ENCODE measurements at regions of chr16 and their contacts with region 1.

Region 1: GRCh38 chr16:19086322-19087199 is 19.1 kb downstream of the COQ7 start:
- DNase-seq: peak; percentile 93 to 94
- ATAC-seq: peak; percentile 97
- H3K4me3 ChIP-seq: peak overlapping the region in 1 of 2 donors; percentile 41
- H3K27ac ChIP-seq: no peak overlapping the region
- H3K4me1 ChIP-seq: no peaks in the 10 kb centered on the region
- H3K27me3 ChIP-seq: no peaks in the 10 kb centered on the region

Region 2: GRCh38 chr16:19067349-19068236 is 19.0 kb before region 1 on chr16 and contains the start of gene COQ7:
- intact Hi-C with region 1: loop called in 1 of 2 experiments (anchors 2 kb)
- DNase-seq: peak; percentile 99
- ATAC-seq: peak; percentile 99
- H3K4me3 ChIP-seq: peak within 1 kb of the TSS; percentile 82 to 98
- H3K27ac ChIP-seq: peak within 1 kb of the TSS; percentile 95 to 100
- H3K4me1 ChIP-seq: no peaks in the 10 kb centered on the region
- H3K27me3 ChIP-seq: no peaks in the 10 kb centered on the region
- total RNA-seq, gene COQ7: 18.7 to 19.2 TPM

Region 3: GRCh38 chr16:19118938-19119431 is 32.4 kb after region 1 on chr16:
- intact Hi-C with region 1: loop called (anchors 2 to 5 kb)
- DNase-seq: peak in 1 of 2 donors; percentile 81
- ATAC-seq: peak; percentile 76
- H3K4me3 ChIP-seq: no peak overlapping the region
- H3K27ac ChIP-seq: peak overlapping the region in 1 of 2 donors; percentile 78
- H3K4me1 ChIP-seq: no peaks in the 10 kb centered on the region
- H3K27me3 ChIP-seq: no peaks in the 10 kb centered on the region

Region 4: GRCh38 chr16:19167710-19168370 is 81.3 kb after region 1 on chr16 and contains the start of gene SYT17:
- intact Hi-C with region 1: loop called (anchors 5 kb)
- DNase-seq: peak; percentile 81 to 89
- ATAC-seq: peak; percentile 85
- H3K4me3 ChIP-seq: peak within 1 kb of the TSS; percentile 44 to 52
- H3K27ac ChIP-seq: no peak within 1 kb of the TSS
- H3K4me1 ChIP-seq: no peaks in the 10 kb centered on the region
- H3K27me3 ChIP-seq: no peaks in the 10 kb centered on the region
- total RNA-seq, gene SYT17: 2.5 to 4.3 TPM

Region 5: DNA sequence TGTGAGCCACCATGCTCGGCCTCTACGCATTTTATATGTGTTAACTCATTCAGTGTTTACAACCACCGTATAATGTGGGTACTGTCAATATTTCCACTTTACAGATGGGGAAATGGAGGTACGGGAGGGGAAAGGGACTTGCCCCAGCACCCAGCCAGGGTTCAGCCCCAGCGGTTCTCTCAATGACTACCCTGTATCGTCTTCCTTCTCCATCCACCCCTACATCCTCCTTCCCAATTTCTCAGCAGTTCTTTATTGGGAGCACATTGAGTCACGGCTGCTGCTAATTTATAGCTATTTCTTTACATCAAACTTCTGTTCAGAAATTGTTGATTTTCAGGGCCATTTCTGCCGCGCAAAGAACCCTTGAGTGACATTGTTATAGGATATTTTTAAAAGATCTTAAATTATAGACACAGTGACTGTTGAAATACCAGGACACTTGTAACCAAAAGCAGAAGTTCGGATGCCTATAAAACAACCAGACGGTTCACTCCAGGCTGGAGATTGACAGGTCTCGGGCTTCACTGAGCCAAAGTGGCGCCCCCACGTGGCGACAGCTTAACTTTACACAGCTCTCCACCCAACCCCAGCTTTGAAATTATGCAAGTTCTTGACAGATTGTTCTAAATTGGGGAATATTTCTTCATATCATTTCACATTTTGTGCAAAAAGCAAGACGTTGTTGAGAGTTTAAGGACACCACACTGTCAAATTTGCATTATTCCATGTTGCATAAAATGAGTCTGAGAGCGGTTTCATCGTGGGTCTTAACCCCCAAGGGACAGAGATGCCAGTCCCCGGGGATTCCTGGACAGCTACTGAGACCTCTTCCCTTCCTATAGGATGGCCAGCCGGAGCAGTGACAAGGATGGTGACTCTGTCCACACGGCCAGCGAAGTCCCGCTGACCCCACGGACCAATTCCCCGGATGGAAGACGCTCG is 93.3 kb after region 1 on chr16:
- intact Hi-C with region 1: loop called in 1 of 2 experiments (anchors 5 kb)
- DNase-seq: peak; percentile 73 to 85
- ATAC-seq: no peak
- H3K4me3 ChIP-seq: no peak overlapping the region
- H3K27ac ChIP-seq: no peak overlapping the region
- H3K4me1 ChIP-seq: no peaks in the 10 kb centered on the region
- H3K27me3 ChIP-seq: no peaks in the 10 kb centered on the region

Region 6: GRCh38 chr16:19375561-19376158 is 289.1 kb after region 1 on chr16:
- intact Hi-C with region 1: loop called (anchors 2 kb)
- DNase-seq: no peak
- ATAC-seq: peak; percentile 77
- H3K4me3 ChIP-seq: no peak overlapping the region
- H3K27ac ChIP-seq: no peak overlapping the region
- H3K4me1 ChIP-seq: no peaks in the 10 kb centered on the region
- H3K27me3 ChIP-seq: no peaks in the 10 kb centered on the region

Region 7: GRCh38 chr16:19474617-19475016 is 388.1 kb after region 1 on chr16:
- intact Hi-C with region 1: no loop called
- DNase-seq: no peak
- ATAC-seq: no peak
- H3K4me3 ChIP-seq: no peak overlapping the region
- H3K27ac ChIP-seq: no peak overlapping the region
- H3K4me1 ChIP-seq: no peaks in the 10 kb centered on the region
- H3K27me3 ChIP-seq: no peaks in the 10 kb centered on the region

Region 8: DNA sequence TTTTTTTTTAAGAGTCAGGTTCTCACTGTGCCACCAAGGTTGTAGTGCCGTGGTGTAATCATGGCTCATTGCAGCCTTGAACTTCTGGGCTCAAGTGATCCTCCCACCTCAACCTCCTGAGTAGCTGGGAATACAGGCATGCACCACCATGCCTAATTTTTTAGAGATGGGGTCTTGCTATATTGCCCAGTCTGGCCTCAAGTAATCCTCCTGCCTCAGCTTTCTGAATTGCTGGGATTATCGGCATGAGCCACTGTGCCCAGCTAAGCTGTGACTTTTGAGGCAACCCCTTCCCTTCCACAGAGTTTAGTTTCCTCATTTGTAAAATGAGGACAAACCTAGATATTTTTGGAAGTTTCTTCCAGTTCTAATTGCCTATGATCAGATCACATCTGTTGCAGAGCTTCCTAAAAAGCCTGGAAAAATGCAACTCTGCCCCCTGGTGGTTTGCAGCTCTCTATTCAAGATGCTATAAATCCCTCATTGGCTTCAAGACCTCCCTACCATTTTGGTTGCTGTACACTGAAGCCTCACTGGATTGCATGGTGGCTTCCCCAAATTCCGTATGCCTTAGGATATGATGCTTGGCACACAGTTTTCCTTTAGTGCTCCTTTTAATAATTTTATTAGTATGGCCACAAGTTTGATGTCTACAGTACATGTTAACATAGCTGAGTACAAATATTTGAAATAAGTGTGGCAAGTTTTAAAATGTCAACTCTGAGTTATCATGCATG is 416.0 kb after region 1 on chr16:
- intact Hi-C with region 1: loop called (anchors 2 to 5 kb)
- DNase-seq: peak; percentile 76 to 80
- ATAC-seq: peak; percentile 76
- H3K4me3 ChIP-seq: no peak overlapping the region
- H3K27ac ChIP-seq: no peak overlapping the region
- H3K4me1 ChIP-seq: no peaks in the 10 kb centered on the region
- H3K27me3 ChIP-seq: no peaks in the 10 kb centered on the region